ENCODE measurements at regions of chr15 and their contacts with region 1.

Region 1: GRCh38 chr15:52780172-52780980 is 9.8 kb downstream of the ONECUT1 start:
- DNase-seq: peak; percentile 65 to 84 (median 78)
- ATAC-seq: peak; percentile 5
- H3K4me3 ChIP-seq: no peak overlapping the region
- H3K27ac ChIP-seq: peak overlapping the region in 3 of 4 donors; percentile 40 to 94 (median 59)
- H3K4me1 ChIP-seq: peaks cover 76% of the 10 kb centered on the region
- H3K27me3 ChIP-seq: no peaks in the 10 kb centered on the region
- CTCF ChIP-seq: peak; percentile 76 to 95 (median 90)
- POLR2A ChIP-seq: peak in 1 of 3 donors; percentile 12

Region 2: GRCh38 chr15:52440400-52440799 is 340.0 kb before region 1 on chr15:
- intact Hi-C with region 1: no loop called
- DNase-seq: no peak
- ATAC-seq: no peak
- H3K4me3 ChIP-seq: no peak overlapping the region
- H3K27ac ChIP-seq: no peak overlapping the region
- H3K4me1 ChIP-seq: peaks cover 2% of the 10 kb centered on the region
- H3K27me3 ChIP-seq: no peaks in the 10 kb centered on the region
- CTCF ChIP-seq: no peak
- POLR2A ChIP-seq: no peak

Region 3: DNA sequence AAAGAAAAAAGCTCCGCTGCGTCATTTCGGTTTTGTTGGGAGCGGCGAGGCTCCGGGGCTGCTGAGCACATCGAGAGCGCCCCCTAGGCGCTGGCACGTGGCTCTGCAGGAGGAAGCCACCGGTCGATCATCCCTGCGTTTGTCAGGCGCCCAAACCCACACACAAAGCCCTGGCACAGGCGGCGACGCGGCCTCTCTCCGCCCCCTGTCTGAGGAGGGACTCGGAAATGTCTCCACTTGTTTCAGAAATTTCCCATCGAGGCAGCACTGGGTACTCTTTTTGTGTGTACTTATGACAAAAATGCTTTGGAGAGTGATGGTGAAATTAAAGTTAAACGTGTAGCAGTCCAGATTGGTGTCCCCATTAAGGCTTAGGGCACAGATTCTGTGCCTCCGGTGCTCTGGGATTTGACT is 417.1 kb after region 1 on chr15:
- intact Hi-C with region 1: loop called (anchors 5 kb)
- DNase-seq: peak; percentile 79 to 81 (median 80)
- ATAC-seq: peak; percentile 97
- H3K4me3 ChIP-seq: no peak overlapping the region
- H3K27ac ChIP-seq: no peak overlapping the region
- H3K4me1 ChIP-seq: peaks cover 8% of the 10 kb centered on the region
- H3K27me3 ChIP-seq: no peaks in the 10 kb centered on the region
- CTCF ChIP-seq: peak; percentile 83 to 96 (median 92)
- POLR2A ChIP-seq: no peak